PC-9 (cell line): ENCODE measurements at regions of chr3 and their contacts with region 1.

Region 1: DNA sequence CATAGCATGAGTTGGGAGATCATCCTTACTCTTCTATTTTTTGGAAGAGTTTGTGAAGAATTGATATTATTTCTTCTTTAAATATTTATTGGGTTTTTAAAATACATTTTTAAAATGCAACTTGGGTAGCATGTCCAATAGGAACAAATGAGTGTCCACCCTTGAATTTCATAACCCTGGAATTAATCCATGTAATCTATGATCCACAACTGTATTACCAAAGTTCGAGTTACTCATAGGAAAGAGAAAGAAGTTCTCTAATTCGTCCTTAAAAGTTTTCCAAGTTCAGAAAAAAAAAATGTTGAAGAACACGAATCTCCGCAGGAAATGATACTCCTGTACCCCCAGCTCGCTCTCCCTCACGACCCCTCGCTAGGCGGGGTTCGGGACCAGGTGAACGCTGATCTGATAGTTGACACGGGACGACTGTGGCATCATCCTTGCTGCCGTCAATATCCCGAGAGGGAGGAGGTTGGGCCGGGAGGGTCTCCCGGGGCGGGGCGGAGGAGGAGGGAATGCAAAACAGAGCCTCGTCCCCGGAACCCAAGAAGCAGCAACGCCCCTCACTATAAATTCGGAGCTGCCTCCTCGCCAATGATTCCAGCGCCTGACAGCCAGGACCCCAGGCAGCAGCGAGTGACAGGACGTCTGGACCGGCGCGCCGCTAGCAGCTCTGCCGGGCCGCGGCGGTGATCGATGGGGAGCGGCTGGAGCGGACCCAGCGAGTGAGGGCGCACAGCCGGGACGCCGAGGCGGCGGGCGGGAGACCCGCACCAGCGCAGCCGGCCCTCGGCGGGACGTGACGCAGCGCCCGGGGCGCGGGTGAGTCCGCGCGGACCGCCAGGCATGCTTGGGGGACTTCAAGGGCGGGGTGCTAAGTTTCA is at the start of gene AGTR1:
- DNase-seq: no peak
- H3K4me3 ChIP-seq: no peak within 1 kb of the TSS
- H3K27ac ChIP-seq: no peak within 1 kb of the TSS
- H3K4me1 ChIP-seq: no peaks in the 10 kb centered on the region
- H3K27me3 ChIP-seq: no peaks in the 10 kb centered on the region
- CTCF ChIP-seq: no peak
- total RNA-seq, gene AGTR1: not detected in 2 replicates

Region 2: GRCh38 chr3:148604270-148605085 is 93.1 kb before region 1 on chr3:
- CTCF ChIA-PET with region 1: no interaction called
- POLR2A ChIA-PET with region 1: no interaction called
- intact Hi-C with region 1: loop called (anchors 5 kb)
- DNase-seq: peak in 1 of 2 experiments; percentile 7
- H3K4me3 ChIP-seq: no peak overlapping the region
- H3K27ac ChIP-seq: no peak overlapping the region
- H3K4me1 ChIP-seq: peaks cover 22% of the 10 kb centered on the region
- H3K27me3 ChIP-seq: no peaks in the 10 kb centered on the region
- CTCF ChIP-seq: no peak